Tibial artery (tissue), 4 donors: ENCODE measurements at regions of chr12 and their contacts with region 1.

Region 1: DNA sequence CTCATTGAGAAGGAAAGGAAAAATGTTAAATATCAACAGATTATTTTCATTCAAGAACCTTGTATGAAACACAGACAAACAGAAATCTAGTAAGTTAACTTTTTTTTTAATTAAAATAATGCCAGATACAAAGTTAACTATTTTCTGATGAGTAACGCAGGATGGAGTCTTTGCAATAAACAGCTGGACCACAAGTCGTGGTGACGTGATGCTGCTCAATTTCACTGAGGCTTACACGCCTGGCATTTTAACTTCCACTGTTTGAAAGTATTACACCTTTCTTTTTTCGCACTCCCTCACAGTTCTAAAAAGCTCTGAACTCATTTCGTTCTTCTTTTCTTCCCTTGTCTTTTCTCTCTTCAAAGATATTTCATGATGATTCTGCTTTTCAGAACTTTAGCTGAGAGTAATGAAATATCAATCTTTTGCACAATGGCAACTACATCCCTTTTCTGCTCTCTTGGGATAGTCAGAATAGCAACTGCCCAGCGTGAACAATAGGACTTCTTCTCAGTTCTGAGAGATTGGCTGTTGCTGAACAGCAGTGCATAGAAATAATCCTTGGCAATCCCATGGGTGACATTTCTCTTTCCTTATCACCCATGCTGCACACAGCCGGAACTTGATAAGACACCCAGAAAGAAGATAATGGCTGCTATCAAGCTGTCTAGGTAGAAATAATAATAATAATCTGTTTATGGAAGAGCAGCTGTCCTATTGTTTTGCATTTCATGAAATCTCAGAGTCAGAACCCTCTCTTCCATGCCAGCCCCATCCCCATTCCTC is 160.5 kb downstream of the BTG1 start:
- DNase-seq: no peak
- H3K4me3 ChIP-seq: no peak overlapping the region
- H3K27ac ChIP-seq: peak overlapping the region in 1 of 2 donors; percentile 26
- H3K4me1 ChIP-seq: peaks cover 12 to 72% (median 31%) of the 10 kb centered on the region in 4 donors
- H3K27me3 ChIP-seq: no peaks in the 10 kb centered on the region
- CTCF ChIP-seq: no peak

Region 2: DNA sequence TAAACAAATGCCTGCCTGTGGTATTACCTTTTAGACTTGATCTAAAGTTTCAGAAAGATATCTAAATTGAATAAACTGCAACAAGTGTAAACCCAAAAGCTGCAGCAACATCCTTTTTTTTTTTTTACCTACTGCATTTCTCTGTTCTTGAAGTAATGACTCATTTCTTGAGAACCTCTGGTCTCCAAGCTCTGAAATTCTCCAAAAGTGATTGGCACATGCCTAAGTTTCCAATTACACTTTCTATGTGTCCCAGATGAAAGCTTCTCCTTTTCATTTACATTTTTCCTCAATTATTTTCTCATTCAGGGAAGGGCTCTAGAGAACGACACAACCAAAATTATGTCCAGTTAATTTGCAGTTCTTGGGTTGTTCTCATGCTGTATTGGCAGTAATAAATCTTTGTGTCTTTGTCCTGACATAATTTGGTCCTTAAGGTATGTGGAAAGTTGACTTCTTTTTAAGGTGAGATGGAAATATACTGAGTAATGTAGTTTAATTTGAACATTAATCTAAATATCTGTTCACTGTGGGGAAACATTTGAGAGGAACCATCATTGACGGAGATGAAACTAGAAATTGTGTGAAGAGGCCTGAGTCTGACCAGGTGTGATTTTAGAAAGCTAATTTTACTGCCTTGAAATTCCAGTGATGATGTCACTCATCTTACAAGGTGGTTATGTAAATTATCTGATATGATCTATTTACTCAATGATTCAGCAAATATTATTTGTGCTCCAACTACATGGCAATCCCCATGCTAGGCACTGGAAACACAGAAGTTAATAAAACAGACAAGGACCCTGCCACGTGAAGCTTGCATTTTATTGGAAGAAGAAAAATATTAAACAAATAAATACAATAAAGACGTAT is 367.1 kb before region 1 on chr12:
- intact Hi-C with region 1: no loop called
- DNase-seq: no peak
- H3K4me3 ChIP-seq: no peak overlapping the region
- H3K27ac ChIP-seq: no peak overlapping the region
- H3K4me1 ChIP-seq: no peaks in the 10 kb centered on the region
- H3K27me3 ChIP-seq: no peaks in the 10 kb centered on the region
- CTCF ChIP-seq: no peak

Region 3: DNA sequence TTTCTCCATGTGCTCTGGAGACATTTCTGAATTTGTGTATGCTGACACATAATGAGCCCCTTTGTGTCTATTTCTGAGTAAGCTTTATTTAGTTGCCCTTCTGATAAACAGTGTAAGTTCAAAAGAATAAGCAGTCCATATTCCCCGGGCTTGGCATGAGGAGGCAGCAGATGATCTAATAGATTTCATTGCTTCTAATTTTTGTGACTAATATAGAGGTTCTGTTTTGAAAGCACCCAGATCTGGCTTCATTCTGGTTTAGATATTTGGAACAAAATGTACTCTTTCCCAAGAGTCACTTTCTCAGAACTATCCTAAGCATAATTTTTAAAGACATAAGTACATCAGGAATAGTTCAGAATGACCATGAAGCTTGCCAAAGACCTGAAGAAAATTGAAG is 130.5 kb before region 1 on chr12:
- intact Hi-C with region 1: loop called (anchors 10 kb)
- DNase-seq: peak in 1 of 2 donors; percentile 39
- H3K4me3 ChIP-seq: no peak overlapping the region
- H3K27ac ChIP-seq: peak overlapping the region; percentile 65 to 71
- H3K4me1 ChIP-seq: peaks cover 0 to 37% (median 9%) of the 10 kb centered on the region in 4 donors
- H3K27me3 ChIP-seq: no peaks in the 10 kb centered on the region
- CTCF ChIP-seq: no peak

Region 4: DNA sequence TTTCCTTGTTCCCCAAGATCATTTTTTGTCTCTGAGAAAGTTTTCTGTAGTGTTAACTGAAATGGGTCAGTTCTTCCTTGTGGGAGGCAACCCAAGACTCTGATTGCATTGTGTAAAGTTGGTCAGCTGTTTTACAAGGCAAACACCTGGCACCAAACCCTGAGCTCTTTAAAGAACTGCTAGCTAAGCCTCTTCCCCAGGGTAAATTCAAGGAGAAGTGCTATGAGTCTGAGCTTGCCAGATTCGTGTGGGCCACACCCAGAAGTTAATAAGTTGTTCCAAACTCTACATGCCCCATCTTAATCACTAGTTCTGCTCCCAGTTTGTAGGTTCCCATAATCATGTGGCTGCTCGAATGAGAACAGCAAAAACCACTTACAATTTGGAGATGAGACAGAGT is 54.1 kb before region 1 on chr12:
- intact Hi-C with region 1: no loop called
- DNase-seq: peak in 1 of 2 donors; percentile 31
- H3K4me3 ChIP-seq: no peak overlapping the region
- H3K27ac ChIP-seq: no peak overlapping the region
- H3K4me1 ChIP-seq: peaks cover 0 to 8% (median 0%) of the 10 kb centered on the region in 4 donors
- H3K27me3 ChIP-seq: no peaks in the 10 kb centered on the region
- CTCF ChIP-seq: no peak

Region 5: GRCh38 chr12:92078167-92079053 is 93.2 kb after region 1 on chr12:
- intact Hi-C with region 1: no loop called
- DNase-seq: peak in 1 of 2 donors; percentile 38
- H3K4me3 ChIP-seq: no peak overlapping the region
- H3K27ac ChIP-seq: peak overlapping the region in 1 of 2 donors; percentile 31
- H3K4me1 ChIP-seq: peaks cover 0 to 31% (median 5%) of the 10 kb centered on the region in 4 donors
- H3K27me3 ChIP-seq: no peaks in the 10 kb centered on the region
- CTCF ChIP-seq: no peak